ENCODE measurements at regions of chr7 and their contacts with region 1.

Region 1: DNA sequence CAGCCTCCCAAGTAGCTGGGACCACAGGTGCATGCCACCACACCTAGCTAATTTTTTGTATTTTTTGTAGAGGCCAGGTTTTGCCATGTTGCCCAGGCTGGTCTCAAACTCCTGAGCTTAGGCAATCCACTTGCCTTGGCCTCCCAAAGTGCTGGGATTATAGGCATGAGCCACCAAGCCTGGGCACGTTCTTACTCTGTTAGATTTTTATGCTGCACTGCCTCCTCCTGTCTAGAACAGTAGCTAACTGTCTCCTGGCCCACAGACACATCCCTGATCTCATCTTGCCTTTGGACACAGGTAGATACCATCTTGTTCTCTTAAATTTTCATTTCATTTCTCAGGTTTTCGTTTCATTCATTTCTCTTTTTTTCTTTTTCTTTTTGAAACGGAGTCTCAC is 41.1 kb downstream of the BLVRA start:
- DNase-seq: no peak
- ATAC-seq: no peak
- H3K4me3 ChIP-seq: no peak overlapping the region
- H3K27ac ChIP-seq: no peak overlapping the region
- H3K4me1 ChIP-seq: no peaks in the 10 kb centered on the region
- H3K27me3 ChIP-seq: no peaks in the 10 kb centered on the region
- CTCF ChIP-seq: no peak

Region 2: GRCh38 chr7:43747309-43748105 is 52.1 kb before region 1 on chr7:
- intact Hi-C with region 1: loop called in 1 of 2 experiments (anchors 10 kb)
- DNase-seq: no peak
- ATAC-seq: no peak
- H3K4me3 ChIP-seq: no peak overlapping the region
- H3K27ac ChIP-seq: no peak overlapping the region
- H3K4me1 ChIP-seq: peaks cover 4% of the 10 kb centered on the region
- H3K27me3 ChIP-seq: no peaks in the 10 kb centered on the region
- CTCF ChIP-seq: no peak

Region 3: DNA sequence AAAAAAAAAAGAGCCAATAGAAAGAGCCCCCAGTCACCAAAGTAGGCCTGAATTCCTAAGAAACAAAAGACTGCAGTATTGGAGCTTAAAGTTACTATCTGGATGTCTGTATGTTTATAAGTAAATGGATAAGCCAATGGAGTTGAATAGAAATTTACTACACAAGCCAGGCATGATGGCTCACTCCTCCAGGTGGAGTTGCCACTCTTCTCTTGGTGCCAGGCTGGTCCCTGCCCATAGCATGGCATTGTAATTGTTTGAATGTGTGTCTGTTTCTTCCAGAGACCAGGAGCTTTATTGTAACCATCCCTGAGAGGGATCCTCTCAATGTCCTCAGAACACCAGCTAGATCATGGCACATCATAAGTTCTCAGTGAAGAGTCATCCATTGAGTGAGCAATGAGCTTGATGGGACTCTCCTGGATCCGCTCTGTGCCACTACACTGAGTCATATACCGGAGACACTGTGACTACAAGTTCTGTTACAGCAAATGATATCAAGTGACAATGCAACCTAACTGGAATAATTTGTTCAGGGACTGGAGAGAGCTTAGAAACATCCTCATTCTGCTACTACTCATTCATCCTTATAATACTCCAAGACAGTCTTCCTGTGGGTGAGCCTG is 44.6 kb after region 1 on chr7:
- intact Hi-C with region 1: no loop called
- DNase-seq: no peak
- ATAC-seq: no peak
- H3K4me3 ChIP-seq: no peak overlapping the region
- H3K27ac ChIP-seq: no peak overlapping the region
- H3K4me1 ChIP-seq: no peaks in the 10 kb centered on the region
- H3K27me3 ChIP-seq: no peaks in the 10 kb centered on the region
- CTCF ChIP-seq: no peak

Region 4: GRCh38 chr7:44606450-44607254 is 807.1 kb after region 1 on chr7 and contains the start of gene OGDH:
- intact Hi-C with region 1: no loop called
- DNase-seq: peak; percentile 98 to 100
- ATAC-seq: peak; percentile 95 to 98 (median 96)
- H3K4me3 ChIP-seq: peak within 1 kb of the TSS; percentile 76
- H3K27ac ChIP-seq: peak within 1 kb of the TSS; percentile 96
- H3K4me1 ChIP-seq: peaks cover 23% of the 10 kb centered on the region
- H3K27me3 ChIP-seq: no peaks in the 10 kb centered on the region
- CTCF ChIP-seq: no peak
- total RNA-seq, gene OGDH: 252 to 500 (median 326) TPM